Thyroid gland (tissue), 4 donors: ENCODE measurements at regions of chr7 and their contacts with region 1.

Region 1: GRCh38 chr7:75994388-75995051 is at the start of gene TMEM120A:
- DNase-seq: peak; percentile 97
- H3K4me3 ChIP-seq: peak within 1 kb of the TSS; percentile 49 to 81 (median 56)
- H3K27ac ChIP-seq: peak within 1 kb of the TSS; percentile 70 to 90 (median 84)
- H3K4me1 ChIP-seq: peaks cover 23 to 29% of the 10 kb centered on the region in 2 donors
- H3K27me3 ChIP-seq: no peaks in the 10 kb centered on the region
- CTCF ChIP-seq: peak in 2 of 6 experiments; percentile 24 to 33
- POLR2A ChIP-seq: peak in 1 of 2 donors; percentile 75
- total RNA-seq, gene TMEM120A: 25.4 to 38.2 (median 34.9) TPM

Region 2: DNA sequence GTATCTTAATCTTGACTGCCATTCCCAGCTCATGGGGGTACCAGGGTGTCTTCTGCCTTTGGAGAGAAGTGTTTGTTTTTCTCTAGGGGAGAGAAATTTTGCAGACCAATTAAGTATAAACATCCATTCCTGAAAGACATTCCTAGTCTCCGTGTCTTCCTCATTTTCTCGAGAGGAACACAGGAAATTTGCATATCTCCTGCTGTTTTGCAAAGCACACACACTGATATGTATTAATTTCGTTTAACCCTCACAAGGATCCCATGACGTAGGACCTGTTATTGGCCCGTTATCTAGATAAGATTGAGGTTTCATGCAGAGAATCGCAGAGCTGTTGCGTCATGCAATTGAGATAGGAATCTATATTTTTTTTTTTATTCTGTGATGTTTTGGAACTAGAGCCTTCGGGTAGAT is 114.7 kb before region 1 on chr7:
- intact Hi-C with region 1: loop called (anchors 5 kb)
- DNase-seq: no peak
- H3K4me3 ChIP-seq: peak overlapping the region in 2 of 3 donors; percentile 63 to 90
- H3K27ac ChIP-seq: peak overlapping the region; percentile 36 to 90 (median 54)
- H3K4me1 ChIP-seq: peaks cover 8 to 20% of the 10 kb centered on the region in 2 donors
- H3K27me3 ChIP-seq: no peaks in the 10 kb centered on the region
- CTCF ChIP-seq: no peak
- POLR2A ChIP-seq: no peak

Region 3: DNA sequence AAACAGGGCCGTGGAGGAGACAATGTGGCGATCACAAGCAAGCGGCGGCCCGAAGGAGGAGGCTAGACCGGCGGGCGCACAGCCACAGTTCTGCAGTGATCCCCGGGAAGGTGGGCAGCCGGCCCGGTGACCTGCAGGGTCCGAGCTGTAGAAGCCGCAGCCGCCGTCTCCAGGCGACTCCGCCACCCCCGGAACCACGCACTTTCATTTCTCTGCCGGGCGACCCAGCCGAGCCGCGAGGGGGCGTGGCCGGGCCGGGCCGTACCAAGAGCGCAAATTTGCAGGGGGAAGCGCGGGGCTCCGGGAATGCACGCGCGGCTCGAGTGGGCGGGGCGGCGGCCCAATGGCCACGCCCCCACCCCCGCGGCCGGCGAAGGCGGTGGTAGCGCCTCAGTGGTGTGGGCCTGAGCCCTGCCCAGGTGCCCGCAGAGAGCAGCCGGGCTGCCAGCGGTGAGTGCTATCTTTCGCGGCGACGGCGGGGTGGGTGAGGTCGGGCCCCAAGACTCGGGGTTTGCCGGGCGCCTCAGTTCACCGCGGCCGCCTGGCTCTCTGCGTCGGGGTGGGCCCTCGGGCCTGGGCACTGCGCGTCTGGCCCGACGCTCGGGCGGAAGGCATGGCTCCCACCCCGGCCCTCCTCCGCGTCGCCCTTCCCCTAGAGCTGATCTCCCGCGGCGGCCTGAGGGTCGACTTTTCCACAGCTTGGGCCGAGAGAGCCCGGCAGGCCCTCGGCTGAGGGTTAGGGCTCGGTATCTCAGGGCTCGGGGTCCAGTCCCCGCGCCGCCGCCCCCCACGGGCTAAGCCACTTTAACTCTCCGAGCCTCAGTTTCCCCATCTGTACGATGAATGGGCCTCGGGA is 79.6 kb before region 1 on chr7 and contains the start of gene POR:
- intact Hi-C with region 1: loop called (anchors 5 kb)
- DNase-seq: peak; percentile 93 to 95
- H3K4me3 ChIP-seq: peak within 1 kb of the TSS; percentile 69 to 100 (median 86)
- H3K27ac ChIP-seq: peak within 1 kb of the TSS; percentile 86 to 98 (median 94)
- H3K4me1 ChIP-seq: peaks cover 33 to 47% of the 10 kb centered on the region in 2 donors
- H3K27me3 ChIP-seq: no peaks in the 10 kb centered on the region
- CTCF ChIP-seq: peak in 1 of 6 experiments; percentile 25
- POLR2A ChIP-seq: peak; percentile 99 to 100
- total RNA-seq, gene POR: 141 to 341 (median 285) TPM

Region 4: GRCh38 chr7:76340617-76341131 is 346.2 kb after region 1 on chr7:
- intact Hi-C with region 1: no loop called
- DNase-seq: peak in 1 of 2 donors; percentile 28
- H3K4me3 ChIP-seq: no peak overlapping the region
- H3K27ac ChIP-seq: peak overlapping the region; percentile 83 to 95 (median 84)
- H3K4me1 ChIP-seq: peaks cover 43 to 48% of the 10 kb centered on the region in 2 donors
- H3K27me3 ChIP-seq: no peaks in the 10 kb centered on the region
- CTCF ChIP-seq: no peak
- POLR2A ChIP-seq: no peak

Region 5: GRCh38 chr7:77409739-77410547 is 1415.4 kb after region 1 on chr7:
- intact Hi-C with region 1: no loop called
- DNase-seq: no peak
- H3K4me3 ChIP-seq: no peak overlapping the region
- H3K27ac ChIP-seq: peak overlapping the region in 2 of 3 donors; percentile 3 to 26
- H3K4me1 ChIP-seq: peaks cover 16% of the 10 kb centered on the region in 2 donors
- H3K27me3 ChIP-seq: no peaks in the 10 kb centered on the region
- CTCF ChIP-seq: no peak
- POLR2A ChIP-seq: no peak